Transverse colon (tissue), 4 donors: ENCODE measurements at regions of chrX and their contacts with region 1.

Region 1: GRCh38 chrX:41116948-41117347 is 31.7 kb downstream of the USP9X start:
- DNase-seq: no peak
- H3K4me3 ChIP-seq: no peak overlapping the region
- H3K27ac ChIP-seq: peak overlapping the region in 1 of 4 donors; percentile 19
- H3K4me1 ChIP-seq: peaks cover 0 to 29% (median 4%) of the 10 kb centered on the region in 4 donors
- H3K27me3 ChIP-seq: no peaks in the 10 kb centered on the region
- CTCF ChIP-seq: no peak
- EP300 ChIP-seq: no peak
- POLR2A ChIP-seq: no peak

Region 2: DNA sequence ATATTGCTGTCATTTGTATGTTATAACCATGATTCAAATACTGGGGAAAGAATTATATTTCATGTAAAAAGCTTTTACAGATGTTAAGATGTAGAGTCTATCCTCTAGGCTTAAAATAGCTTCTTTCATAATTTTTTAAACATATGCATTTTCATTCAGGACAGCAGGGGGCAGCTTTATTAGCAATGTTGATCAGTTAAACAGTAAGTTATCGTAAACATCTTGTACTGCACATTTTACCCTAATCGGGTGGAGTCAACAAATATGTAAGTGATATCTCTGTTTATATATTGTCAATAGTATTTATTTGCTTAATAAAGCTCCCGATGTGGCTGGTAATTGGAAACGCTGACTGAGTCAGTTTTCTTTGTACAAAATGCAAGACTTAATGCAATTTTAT is 239.1 kb before region 1 on chrX:
- in situ Hi-C with region 1: loop called in 3 of 4 experiments (anchors 10 to 25 kb)
- intact Hi-C with region 1: no loop called
- DNase-seq: no peak
- H3K4me3 ChIP-seq: no peak overlapping the region
- H3K27ac ChIP-seq: no peak overlapping the region
- H3K4me1 ChIP-seq: no peaks in the 10 kb centered on the region
- H3K27me3 ChIP-seq: no peaks in the 10 kb centered on the region
- CTCF ChIP-seq: peak; percentile 25 to 42 (median 32)
- EP300 ChIP-seq: no peak
- POLR2A ChIP-seq: no peak